ENCODE measurements at regions of chr10 and their contacts with region 1.

Region 1: DNA sequence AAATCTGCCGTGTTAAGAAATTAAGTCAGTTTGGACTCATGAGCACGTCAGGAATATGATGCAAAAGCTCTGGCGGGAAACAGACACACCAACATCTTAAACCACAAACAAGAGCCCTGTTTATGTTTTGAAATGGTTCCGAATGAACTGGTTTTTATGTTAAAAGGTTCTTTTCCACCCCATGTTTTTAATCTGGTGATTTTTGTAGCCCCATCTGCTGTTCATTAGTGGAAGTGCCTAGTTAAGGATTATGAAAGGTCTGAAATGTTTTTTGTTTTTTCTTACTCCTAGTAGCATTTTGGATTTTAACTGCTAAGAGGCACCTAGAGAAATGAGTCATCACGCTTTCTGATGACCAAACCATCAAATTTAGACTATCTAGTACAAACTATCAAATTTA is 404.1 kb upstream of the MKI67 start:
- DNase-seq: no peak
- H3K4me3 ChIP-seq: no peak overlapping the region
- H3K27ac ChIP-seq: no peak overlapping the region
- H3K27me3 ChIP-seq: peaks cover 0 to 31% (median 10%) of the 10 kb centered on the region in 45 donors
- CTCF ChIP-seq: peak; percentile 45 to 82 (median 70)

Region 2: GRCh38 chr10:128263891-128264688 is 266.2 kb before region 1 on chr10:
- intact Hi-C with region 1: loop called in 1 of 2 experiments (anchors 5 kb)
- DNase-seq: peak; percentile 42 to 92 (median 76)
- H3K4me3 ChIP-seq: peak overlapping the region in 1 of 59 donors; percentile 2
- H3K27ac ChIP-seq: no peak overlapping the region
- H3K27me3 ChIP-seq: peaks cover 0 to 72% (median 49%) of the 10 kb centered on the region in 45 donors
- CTCF ChIP-seq: peak; percentile 51 to 85 (median 71)

Region 3: GRCh38 chr10:128274938-128275337 is 255.4 kb before region 1 on chr10:
- intact Hi-C with region 1: loop called in 1 of 2 experiments (anchors 5 kb)
- DNase-seq: no peak
- H3K4me3 ChIP-seq: no peak overlapping the region
- H3K27ac ChIP-seq: no peak overlapping the region
- H3K27me3 ChIP-seq: peaks cover 0 to 71% (median 27%) of the 10 kb centered on the region in 45 donors
- CTCF ChIP-seq: no peak

Region 4: DNA sequence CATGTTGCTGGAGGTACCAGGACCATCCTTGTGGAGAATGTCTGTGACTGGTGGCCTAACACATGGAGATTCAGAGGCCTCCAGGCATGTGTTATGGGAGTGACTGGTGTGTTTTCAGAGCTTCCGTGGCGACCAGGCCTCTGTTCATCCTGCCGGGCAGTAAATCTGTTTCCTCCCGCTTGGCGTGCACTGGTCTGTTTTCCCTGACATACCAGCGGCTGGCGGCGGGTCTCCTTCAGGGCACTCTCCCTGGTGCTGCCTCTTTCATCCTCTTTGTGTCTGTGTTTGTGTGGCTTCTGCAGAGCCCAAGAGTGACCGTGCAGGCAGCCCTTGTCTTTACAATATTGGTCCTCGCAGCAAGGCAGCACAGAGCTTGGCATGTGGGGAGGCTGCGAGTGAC is 19.0 kb before region 1 on chr10:
- intact Hi-C with region 1: no loop called
- DNase-seq: no peak
- H3K4me3 ChIP-seq: no peak overlapping the region
- H3K27ac ChIP-seq: no peak overlapping the region
- H3K27me3 ChIP-seq: peaks cover 0 to 24% (median 0%) of the 10 kb centered on the region in 45 donors
- CTCF ChIP-seq: no peak

Region 5: DNA sequence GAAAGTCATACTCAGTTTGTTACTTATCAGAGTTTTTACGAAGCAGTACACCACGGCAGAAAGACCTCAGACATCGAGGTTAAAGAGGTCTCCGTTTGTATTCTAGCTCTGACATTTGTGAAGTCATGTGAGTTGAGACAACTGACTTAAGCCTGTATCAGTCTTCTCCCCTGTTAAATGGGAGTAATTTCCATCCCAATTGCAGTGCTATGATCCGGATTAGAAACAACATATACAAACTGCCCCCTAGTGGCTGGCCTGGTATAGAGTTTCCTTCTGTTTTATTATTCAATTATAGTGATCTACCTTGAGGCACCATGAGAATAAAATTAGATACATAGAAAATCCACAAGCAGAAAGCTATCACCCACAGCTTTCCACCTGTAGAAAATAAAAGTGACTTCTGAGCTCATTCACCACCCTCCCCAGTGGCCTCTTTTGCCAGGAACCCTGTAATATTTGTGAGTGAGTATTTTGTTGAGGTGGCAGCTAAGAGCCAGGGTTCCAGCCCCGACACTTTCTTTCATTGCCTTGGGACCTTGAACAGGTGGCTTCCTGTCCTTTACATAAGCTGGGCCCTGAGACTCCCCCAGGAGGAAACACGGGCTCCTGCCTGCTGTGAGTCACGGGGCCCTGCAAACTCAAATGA is 329.6 kb after region 1 on chr10:
- intact Hi-C with region 1: loop called in 1 of 2 experiments (anchors 5 kb)
- DNase-seq: peak in 2 of 10 donors; percentile 17 to 32
- H3K4me3 ChIP-seq: no peak overlapping the region
- H3K27ac ChIP-seq: no peak overlapping the region
- H3K27me3 ChIP-seq: no peaks in the 10 kb centered on the region
- CTCF ChIP-seq: peak; percentile 31 to 70 (median 57)

Region 6: GRCh38 chr10:129466703-129467358 is 936.5 kb after region 1 on chr10 and contains the start of gene MGMT:
- intact Hi-C with region 1: loop called in 1 of 2 experiments (anchors 5 kb)
- DNase-seq: peak; percentile 89 to 95 (median 92)
- H3K4me3 ChIP-seq: peak within 1 kb of the TSS; percentile 50 to 93 (median 82)
- H3K27ac ChIP-seq: peak within 1 kb of the TSS; percentile 21 to 94 (median 85)
- H3K27me3 ChIP-seq: no peaks in the 10 kb centered on the region
- CTCF ChIP-seq: peak in 13 of 56 donors; percentile 10 to 41 (median 22)
- total RNA-seq, gene MGMT: 5.3 to 23.9 (median 15.3) TPM

Region 7: DNA sequence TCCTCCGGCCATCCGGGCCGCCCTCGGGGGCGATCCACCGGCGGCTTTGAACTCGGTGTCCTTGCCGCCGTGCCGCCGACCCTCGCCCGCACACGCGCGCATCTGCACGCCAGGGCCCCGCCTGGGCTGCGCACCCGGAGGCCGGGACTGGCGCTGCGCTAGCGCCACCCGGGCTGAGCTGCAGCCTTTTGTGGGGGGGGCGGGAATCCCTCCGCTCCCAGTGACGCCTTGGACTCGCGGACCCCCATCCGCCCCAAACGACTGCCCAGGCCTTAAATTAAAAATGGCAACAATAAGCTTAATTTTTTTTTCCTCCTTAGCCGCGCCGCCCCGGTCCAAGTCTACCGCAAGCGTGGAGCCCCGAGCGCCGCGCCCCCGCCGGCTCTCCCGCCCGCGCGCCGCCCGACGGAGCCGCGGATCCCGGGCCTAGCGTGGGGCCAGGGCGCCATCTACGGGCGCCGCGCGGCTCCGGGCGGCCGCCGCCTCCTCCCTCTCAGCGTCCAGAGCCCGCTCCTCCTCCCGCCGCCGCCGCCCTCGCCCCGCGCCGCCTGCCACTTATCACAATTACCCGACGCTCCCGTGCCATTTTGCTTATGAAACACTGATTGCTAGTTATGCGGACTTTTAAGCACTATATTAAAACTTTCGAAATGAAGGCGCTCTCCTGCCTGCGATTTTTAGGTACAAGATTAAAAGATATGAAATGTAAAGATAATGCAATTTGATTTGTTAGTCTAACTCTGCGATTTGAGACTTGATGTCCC is 1441.3 kb after region 1 on chr10:
- intact Hi-C with region 1: loop called in 1 of 2 experiments (anchors 10 kb)
- DNase-seq: peak in 1 of 10 donors; percentile 31
- H3K4me3 ChIP-seq: peak overlapping the region in 33 of 59 donors; percentile 18 to 56 (median 39)
- H3K27ac ChIP-seq: no peak overlapping the region
- H3K27me3 ChIP-seq: peaks cover 22 to 100% (median 91%) of the 10 kb centered on the region in 45 donors
- CTCF ChIP-seq: peak in 41 of 56 donors; percentile 9 to 80 (median 41)

Measured in dorsolateral prefrontal cortex (tissue), 120 donors.